PC-3 (cell line): ENCODE measurements at regions of chr2 and their contacts with region 1.

Region 1: DNA sequence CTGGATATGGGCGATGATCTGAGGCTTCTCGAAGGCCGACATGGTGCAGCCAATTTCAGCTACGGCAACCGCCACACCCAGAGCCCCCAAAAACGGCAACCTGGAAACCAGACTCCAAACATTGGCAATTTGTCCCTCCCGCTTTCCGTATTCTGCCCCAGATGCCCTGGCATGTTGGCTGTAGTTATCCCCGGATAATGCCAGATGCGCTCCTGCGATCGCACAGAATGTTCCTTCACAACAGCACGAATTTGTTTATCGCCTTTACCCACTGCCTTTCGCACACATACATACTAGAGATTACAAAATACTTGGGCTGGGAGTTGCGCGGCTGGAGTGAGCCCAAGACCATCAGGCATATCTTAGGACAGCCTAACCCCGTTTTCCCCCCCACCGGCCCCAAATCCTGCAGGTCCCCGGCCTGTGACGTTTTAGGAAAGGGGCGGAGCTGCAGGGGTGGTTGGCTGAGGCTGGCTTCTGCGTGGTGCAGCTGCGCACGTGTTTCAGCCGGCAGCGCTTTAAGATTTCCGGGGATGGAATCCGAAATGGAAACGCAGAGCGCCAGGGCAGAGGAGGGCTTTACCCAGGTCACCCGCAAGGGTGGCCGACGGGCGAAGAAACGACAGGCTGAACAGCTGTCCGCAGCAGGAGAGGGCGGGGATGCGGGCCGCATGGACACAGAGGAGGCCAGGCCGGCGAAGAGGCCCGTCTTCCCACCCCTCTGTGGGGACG is at the start of gene PNO1:
- DNase-seq: peak; percentile 94
- ATAC-seq: peak; percentile 91
- H3K4me3 ChIP-seq: peak within 1 kb of the TSS; percentile 92
- H3K27ac ChIP-seq: peak within 1 kb of the TSS; percentile 91
- H3K4me1 ChIP-seq: peaks cover 14% of the 10 kb centered on the region
- H3K27me3 ChIP-seq: no peaks in the 10 kb centered on the region
- CTCF ChIP-seq: no peak
- total RNA-seq, gene PNO1: 50.8 and 64.1 TPM in 2 replicates

Region 2: GRCh38 chr2:68190991-68191731 is 33.6 kb after region 1 on chr2:
- CTCF ChIA-PET with region 1: no interaction called
- POLR2A ChIA-PET with region 1: interaction called, 4 read pairs
- intact Hi-C with region 1: loop called (anchors 5 kb)
- DNase-seq: peak; percentile 90
- ATAC-seq: peak; percentile 97
- H3K4me3 ChIP-seq: no peak overlapping the region
- H3K27ac ChIP-seq: peak overlapping the region; percentile 63
- H3K4me1 ChIP-seq: peaks cover 53% of the 10 kb centered on the region
- H3K27me3 ChIP-seq: no peaks in the 10 kb centered on the region
- CTCF ChIP-seq: no peak

Region 3: DNA sequence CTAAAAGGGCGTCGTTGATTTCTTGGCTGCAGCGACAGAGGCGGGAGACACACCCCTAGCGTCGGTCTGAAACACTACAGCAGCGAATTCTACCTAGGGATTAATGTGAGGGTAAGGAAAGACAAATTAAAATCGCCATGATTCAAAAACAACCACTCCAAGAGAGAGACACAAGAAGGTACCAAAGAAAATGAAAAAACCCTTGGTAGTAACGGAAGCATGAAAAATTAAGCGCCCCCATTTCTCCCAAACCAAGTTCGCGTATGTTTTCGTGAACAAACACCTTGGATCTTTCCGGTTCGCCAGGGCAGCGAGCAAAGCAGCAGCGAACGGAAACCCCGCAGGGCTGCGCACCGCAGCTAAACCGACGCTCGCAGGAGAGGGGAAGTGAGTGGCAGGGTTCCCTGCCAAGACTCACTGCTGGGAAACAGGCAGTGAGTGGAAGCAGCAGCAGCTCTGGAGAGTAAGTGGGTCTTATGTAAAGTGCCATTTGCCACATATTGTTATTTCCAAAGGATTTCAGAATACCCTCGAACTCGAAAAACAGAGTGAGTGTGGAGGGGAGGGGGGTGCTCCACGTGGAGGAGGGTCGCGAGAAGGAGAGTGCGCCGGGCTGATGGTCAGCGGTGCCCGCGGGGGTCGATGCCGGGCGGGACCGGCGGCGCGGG is 93.8 kb after region 1 on chr2:
- CTCF ChIA-PET with region 1: interaction called, 6 read pairs
- POLR2A ChIA-PET with region 1: no interaction called
- intact Hi-C with region 1: loop called (anchors 1 kb)
- DNase-seq: peak; percentile 93
- ATAC-seq: peak; percentile 60
- H3K4me3 ChIP-seq: peak overlapping the region; percentile 74
- H3K27ac ChIP-seq: peak overlapping the region; percentile 58
- H3K4me1 ChIP-seq: peaks cover 41% of the 10 kb centered on the region
- H3K27me3 ChIP-seq: no peaks in the 10 kb centered on the region
- CTCF ChIP-seq: peak; percentile 69